Psoas muscle (tissue), 8 donors: ENCODE measurements at regions of chr14 and their contacts with region 1.

Region 1: GRCh38 chr14:96297000-96297399 is 41.0 kb downstream of the BDKRB1 start:
- DNase-seq: no peak
- ATAC-seq: no peak
- H3K4me3 ChIP-seq: no peak overlapping the region
- H3K27ac ChIP-seq: no peak overlapping the region
- H3K4me1 ChIP-seq: no peaks in the 10 kb centered on the region
- H3K27me3 ChIP-seq: no peaks in the 10 kb centered on the region
- CTCF ChIP-seq: peak; percentile 47

Region 2: GRCh38 chr14:96349286-96350075 is 52.5 kb after region 1 on chr14:
- intact Hi-C with region 1: loop called in 1 of 2 experiments (anchors 10 kb)
- DNase-seq: no peak
- ATAC-seq: no peak
- H3K4me3 ChIP-seq: no peak overlapping the region
- H3K27ac ChIP-seq: no peak overlapping the region
- H3K4me1 ChIP-seq: no peaks in the 10 kb centered on the region
- H3K27me3 ChIP-seq: no peaks in the 10 kb centered on the region
- CTCF ChIP-seq: no peak

Region 3: DNA sequence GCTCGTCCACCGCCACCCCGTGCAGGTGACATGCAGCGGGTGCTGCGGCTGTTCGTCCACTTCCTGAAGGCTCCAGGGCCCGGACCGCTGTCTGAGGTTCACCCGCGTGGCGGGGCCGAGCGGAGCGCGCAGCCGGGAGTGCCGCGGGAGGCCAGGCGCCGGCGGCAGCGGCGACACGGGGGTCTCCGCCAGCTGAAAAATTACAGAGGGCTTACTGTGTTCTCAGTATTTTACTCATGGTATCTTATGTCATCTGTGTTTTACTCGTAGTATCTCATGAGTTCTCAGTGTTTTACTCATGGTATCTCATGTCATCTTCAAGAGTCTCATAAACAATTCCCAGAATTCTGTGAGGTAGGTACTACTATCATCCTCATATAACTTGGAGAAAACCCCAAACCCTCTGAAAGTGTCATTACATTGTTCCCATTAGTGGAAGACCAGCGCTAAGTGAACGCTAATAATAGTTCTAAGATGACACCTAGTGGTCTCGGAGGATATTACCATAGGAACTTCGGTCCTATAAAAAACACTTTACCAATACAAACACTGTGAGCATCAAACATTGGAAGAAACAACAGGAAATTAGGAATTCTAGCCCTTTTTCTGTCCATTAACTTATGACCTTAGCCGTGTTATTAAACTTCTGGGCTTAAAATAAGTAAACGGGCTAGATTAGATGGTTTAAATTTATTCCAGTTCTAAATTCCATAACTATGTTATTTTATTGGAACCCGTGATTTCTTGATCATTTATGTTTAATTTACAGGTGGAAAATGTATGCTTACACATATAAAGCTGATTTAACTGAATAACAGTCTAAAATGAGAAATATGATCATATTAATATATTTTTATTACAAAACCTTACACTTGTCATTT is 127.3 kb after region 1 on chr14:
- intact Hi-C with region 1: loop called (anchors 2 to 5 kb)
- DNase-seq: no peak
- ATAC-seq: peak; percentile 68 to 90 (median 79)
- H3K4me3 ChIP-seq: peak overlapping the region; percentile 59
- H3K27ac ChIP-seq: no peak overlapping the region
- H3K4me1 ChIP-seq: no peaks in the 10 kb centered on the region
- H3K27me3 ChIP-seq: peaks cover 0 to 11% (median 0%) of the 10 kb centered on the region in 3 donors
- CTCF ChIP-seq: peak; percentile 85